Naive thymus-derived CD4-positive, alpha-beta T cell (primary cell): ENCODE measurements at regions of chr2 and their contacts with region 1.

Region 1: DNA sequence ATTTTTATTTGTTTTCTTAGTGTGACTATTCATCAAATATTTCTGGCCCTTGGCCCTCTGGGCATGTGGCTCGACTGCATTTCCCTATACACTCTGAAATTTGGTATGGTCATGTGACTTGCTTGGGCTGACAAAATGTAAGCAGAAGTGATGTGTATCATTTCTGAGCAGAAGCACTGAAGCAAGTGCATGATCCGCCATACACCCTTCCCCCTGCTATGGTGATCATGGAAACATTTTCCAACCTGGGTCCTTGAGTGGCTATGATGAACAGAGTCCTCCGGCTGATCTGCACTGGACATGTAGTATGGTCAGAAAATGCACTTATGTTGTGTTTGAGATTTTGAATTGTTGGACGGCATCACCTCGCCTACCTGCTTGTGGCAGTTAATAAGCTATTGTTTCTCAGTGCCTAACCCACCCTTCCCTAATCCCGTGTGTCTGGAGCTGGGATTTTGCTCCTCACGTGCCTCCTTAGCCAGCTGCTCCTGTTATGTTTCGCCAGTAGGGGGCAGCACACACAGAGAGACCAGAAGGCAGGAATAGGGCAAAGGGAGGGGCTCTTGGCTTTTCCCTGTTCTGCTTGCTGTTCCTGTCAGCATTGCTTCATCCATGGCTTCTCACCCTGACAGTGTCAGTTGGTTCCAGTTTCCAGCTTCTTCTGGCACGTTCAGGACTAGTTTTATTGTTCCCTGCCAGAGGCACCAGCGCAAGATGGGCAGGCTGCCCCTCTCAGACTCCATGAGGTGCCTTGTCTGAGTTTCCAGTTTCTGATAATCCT is 207.3 kb downstream of the ARL6IP6 start:
- DNase-seq: peak in 1 of 9 donors; percentile 40
- ATAC-seq: no peak
- H3K4me3 ChIP-seq: no peak overlapping the region
- H3K4me3 Mint-ChIP-seq: no peak overlapping the region
- H3K27ac ChIP-seq: no peak overlapping the region
- H3K27ac Mint-ChIP-seq: no peak overlapping the region
- H3K4me1 ChIP-seq: no peaks in the 10 kb centered on the region
- H3K4me1 Mint-ChIP-seq: no peaks in the 10 kb centered on the region
- H3K27me3 ChIP-seq: no peaks in the 10 kb centered on the region
- H3K27me3 Mint-ChIP-seq: peaks cover 0 to 11% (median 0%) of the 10 kb centered on the region in 5 donors

Region 2: GRCh38 chr2:152974146-152974545 is 48.4 kb after region 1 on chr2:
- CTCF ChIA-PET with region 1: no interaction called
- POLR2A ChIA-PET with region 1: no interaction called
- intact Hi-C with region 1: no loop called
- DNase-seq: no peak
- ATAC-seq: no peak
- H3K4me3 ChIP-seq: no peak overlapping the region
- H3K4me3 Mint-ChIP-seq: no peak overlapping the region
- H3K27ac ChIP-seq: no peak overlapping the region
- H3K27ac Mint-ChIP-seq: no peak overlapping the region
- H3K4me1 ChIP-seq: no peaks in the 10 kb centered on the region
- H3K4me1 Mint-ChIP-seq: no peaks in the 10 kb centered on the region
- H3K27me3 ChIP-seq: no peaks in the 10 kb centered on the region
- H3K27me3 Mint-ChIP-seq: peaks cover 0 to 4% (median 0%) of the 10 kb centered on the region in 5 donors

Region 3: GRCh38 chr2:154375579-154375931 is 1449.8 kb after region 1 on chr2:
- CTCF ChIA-PET with region 1: no interaction called
- POLR2A ChIA-PET with region 1: no interaction called
- intact Hi-C with region 1: loop called in 1 of 2 experiments (anchors 10 kb)
- DNase-seq: peak in 1 of 9 donors; percentile 7
- ATAC-seq: no peak
- H3K4me3 ChIP-seq: no peak overlapping the region
- H3K4me3 Mint-ChIP-seq: no peak overlapping the region
- H3K27ac ChIP-seq: no peak overlapping the region
- H3K27ac Mint-ChIP-seq: no peak overlapping the region
- H3K4me1 ChIP-seq: no peaks in the 10 kb centered on the region
- H3K4me1 Mint-ChIP-seq: peaks cover 0 to 5% (median 0%) of the 10 kb centered on the region in 7 donors
- H3K27me3 ChIP-seq: no peaks in the 10 kb centered on the region
- H3K27me3 Mint-ChIP-seq: peaks cover 0 to 4% (median 0%) of the 10 kb centered on the region in 5 donors